ENCODE measurements at regions of chr9 and their contacts with region 1.

Region 1: DNA sequence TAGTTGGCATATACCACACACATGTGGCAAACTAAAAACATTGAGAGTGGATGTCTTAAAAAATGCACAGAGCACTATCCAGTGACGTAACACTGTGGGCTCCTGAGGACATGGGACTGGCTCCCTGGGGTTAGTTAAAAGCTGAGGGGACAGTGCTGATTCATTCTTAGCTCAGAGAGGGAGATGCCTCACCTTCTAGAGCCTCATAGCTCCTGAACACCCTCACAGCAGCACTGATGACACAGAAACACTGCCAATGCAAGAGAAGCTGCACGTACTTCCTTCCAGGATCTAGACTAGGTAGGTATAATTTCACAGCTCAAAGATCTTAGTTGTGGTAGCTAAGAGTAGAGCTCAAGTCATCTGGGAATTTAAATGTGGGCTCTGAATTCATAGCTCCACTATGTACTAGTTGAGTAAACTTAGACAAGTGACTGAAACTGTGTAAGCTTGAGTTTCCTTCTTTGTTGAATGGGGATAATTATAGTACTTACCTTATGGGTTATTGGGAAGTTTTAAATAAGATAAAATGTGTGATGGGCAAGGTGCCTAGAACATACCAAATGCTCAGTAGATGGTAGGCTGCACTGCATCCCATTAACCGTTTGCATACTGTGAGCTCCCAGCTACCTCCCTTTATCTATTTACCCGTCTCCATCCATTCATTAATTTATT is 279.9 kb downstream of the ASTN2 start:
- DNase-seq: no peak
- H3K4me3 ChIP-seq: no peak overlapping the region
- CTCF ChIP-seq: no peak
- POLR2A ChIP-seq: no peak

Region 2: GRCh38 chr9:117063721-117064471 is 71.1 kb before region 1 on chr9:
- intact Hi-C with region 1: no loop called
- DNase-seq: no peak
- H3K4me3 ChIP-seq: no peak overlapping the region
- CTCF ChIP-seq: no peak
- POLR2A ChIP-seq: no peak

Region 3: DNA sequence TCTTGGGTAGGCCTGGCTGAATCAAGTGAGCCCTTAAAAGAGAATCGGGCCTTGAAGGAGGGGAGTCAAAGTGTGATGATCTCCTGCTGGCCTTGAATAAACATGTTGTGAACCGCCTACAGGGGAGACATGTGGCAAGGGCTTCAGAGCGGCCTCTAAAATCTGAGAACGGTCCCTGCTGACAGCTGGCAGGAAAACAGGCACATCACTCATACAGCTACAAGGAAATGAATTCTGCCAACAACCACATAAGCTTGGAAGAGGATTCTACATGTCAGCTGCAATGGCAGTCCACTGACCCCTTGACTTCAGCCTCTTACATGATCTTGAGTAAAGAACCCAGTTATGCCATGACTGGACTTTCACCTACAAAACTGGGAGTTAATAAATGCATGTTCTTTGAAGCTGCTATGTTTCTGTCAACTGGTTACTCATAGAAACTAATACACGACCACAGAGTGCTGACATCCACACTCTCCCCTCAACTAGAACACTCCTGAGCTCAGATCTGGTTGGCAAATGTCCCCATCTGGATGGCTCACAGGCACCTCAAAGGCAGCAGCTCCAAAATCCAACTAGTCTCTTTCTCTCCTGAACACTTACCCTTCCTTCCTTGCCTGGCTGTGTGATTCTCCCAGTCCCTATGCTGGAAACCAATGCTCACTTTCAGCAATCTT is 53.2 kb before region 1 on chr9:
- intact Hi-C with region 1: no loop called
- DNase-seq: no peak
- H3K4me3 ChIP-seq: no peak overlapping the region
- CTCF ChIP-seq: no peak
- POLR2A ChIP-seq: no peak

Region 4: DNA sequence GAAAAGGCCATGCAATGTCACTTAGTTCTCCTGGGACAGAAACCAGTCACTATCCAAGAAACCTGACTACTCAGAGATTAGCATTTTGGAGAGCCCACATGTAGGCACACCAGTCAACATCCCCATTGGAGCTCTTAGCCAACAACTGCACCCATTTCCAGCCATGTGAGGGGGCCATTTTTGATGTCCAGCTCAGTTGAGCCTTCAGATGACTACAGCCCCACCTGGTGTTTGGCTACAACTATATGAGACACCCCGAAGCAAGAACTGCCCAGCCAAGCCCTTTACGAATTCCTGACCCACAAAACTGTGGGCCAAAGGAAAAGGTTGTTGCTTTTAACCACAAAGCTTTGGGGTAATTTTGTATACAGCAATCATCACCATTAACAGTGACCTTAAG is 20.2 kb before region 1 on chr9:
- intact Hi-C with region 1: loop called (anchors 1 kb)
- DNase-seq: no peak
- H3K4me3 ChIP-seq: no peak overlapping the region
- CTCF ChIP-seq: no peak
- POLR2A ChIP-seq: no peak

Region 5: GRCh38 chr9:117189121-117189520 is 54.2 kb after region 1 on chr9:
- intact Hi-C with region 1: no loop called
- DNase-seq: no peak
- H3K4me3 ChIP-seq: no peak overlapping the region
- CTCF ChIP-seq: no peak
- POLR2A ChIP-seq: no peak

Measured in lower leg skin (tissue), 4 donors.